PC-9 (cell line): ENCODE measurements at regions of chr16 and their contacts with region 1.

Region 1: GRCh38 chr16:14427371-14427948 is 202.6 kb downstream of the PARN start:
- DNase-seq: peak; percentile 67 to 86
- H3K4me3 ChIP-seq: peak overlapping the region; percentile 6; the same call in 1 of the 2 replicates
- H3K27ac ChIP-seq: peak overlapping the region; percentile 94
- H3K4me1 ChIP-seq: peaks cover 53% of the 10 kb centered on the region
- H3K27me3 ChIP-seq: no peaks in the 10 kb centered on the region
- CTCF ChIP-seq: no peak

Region 2: GRCh38 chr16:13957197-13958078 is 470.0 kb before region 1 on chr16:
- CTCF ChIA-PET with region 1: no interaction called
- POLR2A ChIA-PET with region 1: no interaction called
- intact Hi-C with region 1: no loop called
- DNase-seq: peak; percentile 86 to 98
- H3K4me3 ChIP-seq: peak overlapping the region; percentile 51
- H3K27ac ChIP-seq: peak overlapping the region; percentile 95
- H3K4me1 ChIP-seq: peaks cover 72% of the 10 kb centered on the region
- H3K27me3 ChIP-seq: no peaks in the 10 kb centered on the region
- CTCF ChIP-seq: no peak

Region 3: DNA sequence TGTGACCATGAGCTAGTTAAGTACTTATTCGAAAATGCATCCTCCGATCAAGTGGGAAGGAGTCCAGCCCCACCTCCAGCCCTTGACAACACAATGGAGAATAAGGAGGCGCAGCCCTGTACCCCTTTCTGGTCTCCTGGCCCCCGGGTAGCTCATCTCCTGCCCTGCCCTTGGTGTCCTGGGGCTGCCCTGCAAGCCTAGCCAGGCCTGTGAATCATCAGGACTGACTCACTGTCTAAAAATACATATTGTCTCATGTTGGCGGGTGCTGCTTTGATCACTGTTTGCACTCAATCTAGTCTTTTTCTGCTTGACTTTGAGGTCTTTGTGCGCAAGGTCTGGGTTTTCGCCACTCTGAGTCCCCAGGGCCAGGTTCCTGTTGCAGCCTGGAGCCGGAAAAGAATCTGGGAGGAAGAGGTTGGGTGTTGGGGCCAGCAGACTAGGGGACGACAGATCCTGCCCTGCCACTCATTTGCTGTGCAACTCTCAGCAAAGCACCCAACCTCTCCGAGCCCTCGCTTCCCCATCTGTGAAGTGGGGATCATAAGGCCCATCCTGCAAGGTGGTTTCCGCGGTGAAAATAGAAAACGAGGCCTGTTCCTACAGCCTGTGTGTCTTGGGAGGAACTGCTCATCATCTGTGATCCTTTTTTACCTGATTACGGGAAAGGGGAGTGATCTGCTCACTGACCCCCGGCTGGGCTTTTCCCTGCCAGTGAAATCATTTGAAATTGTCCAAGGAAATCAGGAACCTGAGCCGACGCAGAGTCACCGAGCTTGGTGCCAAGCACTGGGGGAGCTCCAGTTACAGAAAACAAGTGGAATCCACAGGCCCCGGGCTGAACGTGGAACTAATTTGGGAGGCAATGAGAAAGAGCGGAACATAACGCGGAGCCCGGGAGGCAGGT is 27.8 kb before region 1 on chr16:
- CTCF ChIA-PET with region 1: interaction called, 3 read pairs
- POLR2A ChIA-PET with region 1: interaction called, 35 read pairs
- intact Hi-C with region 1: no loop called
- DNase-seq: peak; percentile 83 to 85
- H3K4me3 ChIP-seq: peak overlapping the region; percentile 45
- H3K27ac ChIP-seq: peak overlapping the region; percentile 92
- H3K4me1 ChIP-seq: peaks cover 51% of the 10 kb centered on the region
- H3K27me3 ChIP-seq: no peaks in the 10 kb centered on the region
- CTCF ChIP-seq: no peak